Panc1 (cell line): ENCODE measurements at regions of chr10 and their contacts with region 1.

Region 1: GRCh38 chr10:124495249-124495648 is 33.6 kb downstream of the LHPP start:
- DNase-seq: no peak
- ATAC-seq: no peak
- H3K4me3 ChIP-seq: no peak overlapping the region
- H3K27ac ChIP-seq: no peak overlapping the region
- H3K4me1 ChIP-seq: no peaks in the 10 kb centered on the region
- H3K27me3 ChIP-seq: no peaks in the 10 kb centered on the region
- CTCF ChIP-seq: no peak

Region 2: DNA sequence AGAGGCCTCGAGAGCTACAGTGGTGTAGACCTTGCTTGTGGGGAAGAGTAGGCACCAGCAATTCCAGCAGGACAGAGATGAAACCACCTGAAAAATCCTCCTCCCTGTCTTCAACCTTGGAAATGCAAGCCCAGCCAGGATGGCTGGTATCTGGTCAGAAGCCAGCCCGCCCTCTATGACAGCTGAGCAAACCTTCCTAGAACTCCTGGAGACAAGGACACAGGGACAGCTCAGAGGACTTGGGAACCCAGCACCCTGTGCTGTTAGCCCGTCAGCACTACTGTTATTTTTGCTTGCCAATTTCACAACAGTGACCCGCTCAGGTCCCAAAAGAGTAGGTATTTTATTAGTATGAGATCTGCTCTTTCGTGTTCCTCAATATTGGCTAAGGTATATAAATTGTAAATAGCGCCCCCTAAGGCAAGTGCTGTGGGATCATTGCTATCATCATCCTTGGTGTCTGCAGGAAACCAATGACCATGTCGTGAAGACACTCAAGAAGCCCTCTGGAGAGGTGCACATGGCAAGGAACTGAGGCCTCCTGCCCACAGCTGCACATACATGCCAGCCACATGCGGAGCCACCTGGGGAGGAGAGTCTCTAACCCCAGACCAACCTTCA is 245.3 kb before region 1 on chr10:
- CTCF ChIA-PET with region 1: no interaction called
- POLR2A ChIA-PET with region 1: no interaction called
- in situ Hi-C with region 1: no loop called
- intact Hi-C with region 1: no loop called
- DNase-seq: no peak
- ATAC-seq: no peak
- H3K4me3 ChIP-seq: no peak overlapping the region
- H3K27ac ChIP-seq: no peak overlapping the region
- H3K4me1 ChIP-seq: no peaks in the 10 kb centered on the region
- H3K27me3 ChIP-seq: peaks cover 2% of the 10 kb centered on the region; the same call in 1 of the 2 replicates
- CTCF ChIP-seq: no peak; the same call in 1 of the 2 replicates

Region 3: DNA sequence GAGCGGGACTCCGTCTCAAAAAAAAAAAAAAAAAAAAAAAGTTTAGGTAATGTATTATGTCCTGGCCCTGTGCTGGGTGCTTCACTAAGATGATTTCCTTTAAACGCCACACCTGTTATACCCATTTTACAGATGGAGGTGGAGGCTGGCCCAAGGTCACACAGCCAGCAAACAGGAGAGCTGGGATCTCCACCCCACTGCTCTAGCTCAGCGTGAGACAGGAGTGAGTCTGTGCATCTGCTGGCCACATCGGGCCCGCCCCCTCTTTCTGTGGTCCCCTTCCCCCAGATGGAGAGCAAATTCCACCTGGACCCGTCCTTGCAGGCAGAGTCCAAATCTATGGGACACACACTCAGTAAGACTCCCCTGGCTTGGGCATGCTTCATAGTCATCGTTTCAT is 17.4 kb after region 1 on chr10:
- CTCF ChIA-PET with region 1: no interaction called
- POLR2A ChIA-PET with region 1: interaction called, 15 read pairs
- in situ Hi-C with region 1: no loop called
- intact Hi-C with region 1: no loop called
- DNase-seq: no peak
- ATAC-seq: no peak
- H3K4me3 ChIP-seq: no peak overlapping the region
- H3K27ac ChIP-seq: no peak overlapping the region
- H3K4me1 ChIP-seq: no peaks in the 10 kb centered on the region
- H3K27me3 ChIP-seq: no peaks in the 10 kb centered on the region
- CTCF ChIP-seq: no peak